ENCODE measurements at regions of chrX and their contacts with region 1.

Region 1: GRCh38 chrX:29478336-29479069 is 736.9 kb upstream of the MAGEB2 start:
- DNase-seq: peak; percentile 51
- ATAC-seq: peak; percentile 99
- H3K4me3 ChIP-seq: peak overlapping the region; percentile 70
- H3K27ac ChIP-seq: peak overlapping the region; percentile 83
- H3K4me1 ChIP-seq: no peaks in the 10 kb centered on the region
- H3K27me3 ChIP-seq: no peaks in the 10 kb centered on the region
- CTCF ChIP-seq: peak; percentile 74 to 86 (median 82)
- EP300 ChIP-seq: no peak
- POLR2A ChIP-seq: peak; percentile 33; the same call in 1 of the 2 replicates
- RAD21 ChIP-seq: peak; percentile 61

Region 2: GRCh38 chrX:29453333-29453732 is 25.2 kb before region 1 on chrX:
- CTCF ChIA-PET with region 1: interaction called, 11 read pairs
- POLR2A ChIA-PET with region 1: no interaction called
- RAD21 ChIA-PET with region 1: no interaction called
- SMC1A ChIA-PET with region 1: interaction called, 3 read pairs
- in situ Hi-C with region 1: no loop called
- intact Hi-C with region 1: no loop called
- DNase-seq: no peak
- ATAC-seq: peak; percentile 68
- H3K4me3 ChIP-seq: no peak overlapping the region
- H3K27ac ChIP-seq: no peak overlapping the region
- H3K4me1 ChIP-seq: no peaks in the 10 kb centered on the region
- H3K27me3 ChIP-seq: no peaks in the 10 kb centered on the region
- CTCF ChIP-seq: no peak
- EP300 ChIP-seq: no peak
- POLR2A ChIP-seq: no peak
- RAD21 ChIP-seq: no peak

Region 3: DNA sequence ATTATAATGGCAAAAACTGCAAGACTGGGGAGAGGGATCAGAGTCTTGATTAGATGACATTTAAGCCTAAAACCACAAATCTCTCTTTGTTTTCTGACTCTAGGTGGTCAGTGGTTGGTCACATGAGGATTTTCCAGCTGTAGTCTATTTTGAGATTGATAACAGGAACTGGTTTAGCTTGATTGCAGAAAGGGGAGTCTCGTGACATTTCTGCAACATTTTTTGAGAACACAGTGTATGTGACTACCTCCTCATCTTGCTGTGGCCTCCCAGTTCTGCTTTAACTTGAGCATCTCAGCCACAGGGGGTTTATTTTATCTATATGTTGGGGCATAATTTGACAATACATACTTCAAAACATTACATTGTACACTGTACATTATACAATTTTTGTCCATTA is 10.4 kb after region 1 on chrX:
- CTCF ChIA-PET with region 1: interaction called, 14 read pairs
- POLR2A ChIA-PET with region 1: no interaction called
- RAD21 ChIA-PET with region 1: no interaction called
- SMC1A ChIA-PET with region 1: interaction called, 5 read pairs
- in situ Hi-C with region 1: no loop called
- intact Hi-C with region 1: no loop called
- DNase-seq: peak; percentile 25
- ATAC-seq: peak; percentile 42; the same call in 2 of the 3 replicates
- H3K4me3 ChIP-seq: no peak overlapping the region
- H3K27ac ChIP-seq: no peak overlapping the region
- H3K4me1 ChIP-seq: peaks cover 8% of the 10 kb centered on the region; the same call in 1 of the 2 replicates
- H3K27me3 ChIP-seq: no peaks in the 10 kb centered on the region
- CTCF ChIP-seq: no peak
- EP300 ChIP-seq: no peak
- POLR2A ChIP-seq: no peak
- RAD21 ChIP-seq: no peak

Region 4: DNA sequence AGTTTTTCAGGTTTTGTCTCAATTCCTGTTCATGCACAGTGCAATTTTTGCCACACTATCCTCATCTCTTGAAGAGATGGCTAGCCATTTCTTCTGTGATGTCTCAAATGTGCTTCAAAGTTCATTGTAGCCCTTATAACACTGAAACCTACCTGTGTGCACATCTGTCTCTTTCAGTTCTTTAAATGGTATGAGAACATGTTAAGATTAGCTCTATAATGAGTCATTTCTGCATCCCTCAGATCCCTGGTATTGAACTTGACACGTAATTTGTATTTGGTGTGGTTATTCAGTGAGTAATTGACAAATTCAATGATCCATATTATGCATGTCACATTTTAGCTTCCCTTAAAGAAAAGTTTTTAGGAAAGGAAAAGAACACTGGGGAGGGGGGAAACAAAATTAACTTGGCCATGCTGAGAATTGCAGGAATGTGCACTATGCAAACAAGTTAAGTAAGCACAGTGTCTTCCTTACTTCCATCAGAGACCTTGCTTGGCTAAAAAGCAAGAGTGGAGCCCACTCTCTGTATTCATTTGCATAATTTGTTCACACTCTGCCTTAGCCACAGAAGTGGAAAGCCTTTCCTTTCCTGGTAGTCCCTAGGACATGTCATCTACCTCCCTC is 77.1 kb after region 1 on chrX:
- CTCF ChIA-PET with region 1: interaction called, 5 read pairs
- POLR2A ChIA-PET with region 1: no interaction called
- RAD21 ChIA-PET with region 1: interaction called, 3 read pairs
- SMC1A ChIA-PET with region 1: interaction called, 3 read pairs
- in situ Hi-C with region 1: no loop called
- intact Hi-C with region 1: loop called (anchors 2 kb)
- DNase-seq: peak; percentile 93
- ATAC-seq: peak; percentile 95
- H3K4me3 ChIP-seq: peak overlapping the region; percentile 67; the same call in 1 of the 2 replicates
- H3K27ac ChIP-seq: peak overlapping the region; percentile 90
- H3K4me1 ChIP-seq: peaks cover 6% of the 10 kb centered on the region; the same call in 1 of the 2 replicates
- H3K27me3 ChIP-seq: no peaks in the 10 kb centered on the region
- CTCF ChIP-seq: no peak
- EP300 ChIP-seq: peak; percentile 98 to 99
- POLR2A ChIP-seq: peak; percentile 54; the same call in 1 of the 2 replicates
- RAD21 ChIP-seq: 0 out of 2 replicates have a peak, but pooled peaks have one; percentile 31